K562 (cell line): ENCODE measurements at regions of chr5 and their contacts with region 1.

Region 1: DNA sequence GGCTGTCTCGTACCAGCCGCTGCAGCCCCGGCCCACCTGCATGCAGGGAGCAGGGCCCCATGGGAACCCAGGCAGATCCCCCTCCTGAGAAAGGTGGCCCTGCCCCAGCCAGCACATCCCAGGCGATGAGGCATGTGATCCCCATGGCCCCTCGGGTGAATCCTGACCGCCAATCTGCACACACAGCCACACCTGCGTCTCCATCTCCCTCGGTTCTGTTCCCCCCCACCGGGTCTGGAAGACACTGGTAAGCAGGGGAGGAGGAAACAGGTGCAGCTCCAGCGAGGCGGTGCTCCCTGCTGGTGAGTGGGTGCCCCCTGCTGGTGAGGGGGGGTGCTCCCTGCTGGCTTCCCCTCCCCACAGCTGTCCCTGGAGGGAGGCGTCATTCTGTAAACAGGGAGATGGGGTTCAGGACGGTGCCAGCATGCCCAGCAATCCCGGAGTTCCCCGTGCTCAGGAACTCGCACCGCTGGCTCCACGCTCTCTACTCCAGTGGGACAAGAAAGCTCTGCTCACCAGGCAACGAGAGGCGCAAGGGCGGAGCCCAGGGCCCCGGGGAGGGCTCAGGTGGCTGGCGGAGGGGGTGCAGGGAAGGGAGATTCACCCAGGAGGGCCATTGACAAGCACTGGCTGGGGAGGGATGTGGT is 28.4 kb upstream of the SLC12A7 start:
- DNase-seq: peak; percentile 81 to 94 (median 90)
- ATAC-seq: peak; percentile 94
- H3K4me3 ChIP-seq: no peak overlapping the region
- H3K27ac ChIP-seq: no peak overlapping the region
- H3K4me1 ChIP-seq: peaks cover 0 to 48% of the 10 kb centered on the region in 2 experiments; a peak in 2 of 5 replicates
- H3K27me3 ChIP-seq: peaks cover 21 to 83% of the 10 kb centered on the region in 2 experiments; a peak in 4 of 5 replicates
- CTCF ChIP-seq: peak; percentile 93 to 95 (median 93)
- EP300 ChIP-seq: no peak
- POLR2A ChIP-seq: no peak
- RAD21 ChIP-seq: peak; percentile 94 to 99

Region 2: DNA sequence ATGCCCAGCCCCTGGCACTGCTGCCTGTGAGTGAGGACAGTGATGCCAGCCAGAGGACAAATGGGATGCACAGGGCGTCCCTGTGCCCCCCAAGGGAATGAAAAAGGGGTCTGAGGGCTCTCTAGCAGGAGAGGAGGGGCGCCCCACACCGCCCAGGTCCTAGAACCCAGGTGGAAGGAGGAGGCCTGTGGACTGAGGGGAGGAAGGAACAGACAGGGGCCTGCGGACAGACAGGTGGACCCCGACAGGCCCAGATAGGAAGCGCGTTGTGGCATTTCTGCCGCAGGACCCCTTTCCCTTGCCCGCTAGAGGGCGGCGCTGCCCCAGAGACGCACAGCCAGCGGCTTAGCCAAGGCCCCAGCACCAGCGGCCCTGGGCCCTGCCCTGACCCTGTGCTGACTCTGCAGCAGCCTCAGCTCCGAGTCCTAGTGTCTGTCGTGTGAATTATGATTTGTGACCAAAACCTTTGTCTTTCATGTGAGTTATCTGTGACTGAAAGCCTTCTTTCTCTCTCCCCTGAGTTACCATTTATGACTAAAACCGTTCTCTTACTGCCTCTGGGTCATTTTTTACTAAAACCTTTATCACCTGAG is 216.9 kb before region 1 on chr5:
- CTCF ChIA-PET with region 1: interaction called, 9 read pairs
- POLR2A ChIA-PET with region 1: interaction called, 4 read pairs
- in situ Hi-C with region 1: no loop called
- intact Hi-C with region 1: loop called (anchors 1 kb)
- DNase-seq: peak; percentile 83 to 90 (median 88)
- ATAC-seq: peak; percentile 100
- H3K4me3 ChIP-seq: no peak overlapping the region
- H3K27ac ChIP-seq: no peak overlapping the region
- H3K4me1 ChIP-seq: peaks cover 7 to 20% of the 10 kb centered on the region in 2 experiments; a peak in 3 of 5 replicates
- H3K27me3 ChIP-seq: no peaks in the 10 kb centered on the region
- CTCF ChIP-seq: peak; percentile 95 to 96 (median 96)
- EP300 ChIP-seq: no peak
- POLR2A ChIP-seq: no peak
- RAD21 ChIP-seq: peak; percentile 97 to 99

Region 3: DNA sequence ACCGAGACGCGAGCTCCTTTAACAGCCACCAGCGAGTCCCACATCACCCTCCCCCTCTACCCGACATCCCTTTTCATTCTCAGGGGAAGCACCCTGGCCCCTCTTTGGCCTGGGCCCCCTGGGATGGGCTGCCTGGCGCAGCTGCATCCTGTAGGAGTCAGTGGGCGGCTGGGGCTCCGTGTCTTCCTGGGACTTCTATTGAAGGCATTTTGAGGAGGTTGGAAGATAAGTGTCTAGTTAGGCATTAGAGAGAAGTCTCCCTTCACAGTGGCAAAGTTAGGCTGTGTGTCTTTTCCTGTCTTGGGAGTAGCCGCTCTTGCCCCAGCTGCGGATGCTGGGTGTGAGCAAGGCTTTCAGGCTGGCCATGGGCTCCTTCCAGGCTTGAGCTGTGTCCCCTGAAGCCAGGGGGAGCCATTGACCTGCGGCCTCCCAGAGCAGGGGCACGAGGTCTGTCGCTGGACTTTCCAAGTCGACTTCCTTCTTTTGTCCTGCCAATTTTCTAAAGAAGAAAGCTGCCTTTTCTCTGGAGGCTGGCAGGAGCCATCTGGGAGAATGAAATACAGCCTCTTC is 150.2 kb before region 1 on chr5:
- CTCF ChIA-PET with region 1: interaction called, 22 read pairs
- POLR2A ChIA-PET with region 1: interaction called, 3 read pairs
- in situ Hi-C with region 1: no loop called
- intact Hi-C with region 1: no loop called
- DNase-seq: peak in 2 of 4 experiments; percentile 50 to 65
- ATAC-seq: peak; percentile 85
- H3K4me3 ChIP-seq: no peak overlapping the region
- H3K27ac ChIP-seq: no peak overlapping the region
- H3K4me1 ChIP-seq: no peaks in the 10 kb centered on the region; a peak in 1 of 5 replicates
- H3K27me3 ChIP-seq: peaks cover 7 to 43% of the 10 kb centered on the region in 2 experiments; a peak in 3 of 5 replicates
- CTCF ChIP-seq: peak; percentile 66 to 79 (median 66)
- EP300 ChIP-seq: no peak
- POLR2A ChIP-seq: no peak
- RAD21 ChIP-seq: peak; percentile 87 to 89

Region 4: GRCh38 chr5:1021136-1021968 is 118.9 kb before region 1 on chr5:
- CTCF ChIA-PET with region 1: no interaction called
- POLR2A ChIA-PET with region 1: no interaction called
- in situ Hi-C with region 1: loop called (anchors 10 kb)
- intact Hi-C with region 1: no loop called
- DNase-seq: no peak
- ATAC-seq: no peak; the same call in 2 of the 3 replicates
- H3K4me3 ChIP-seq: no peak overlapping the region
- H3K27ac ChIP-seq: no peak overlapping the region
- H3K4me1 ChIP-seq: no peaks in the 10 kb centered on the region; a peak in 2 of 5 replicates
- H3K27me3 ChIP-seq: peaks cover 40 to 48% of the 10 kb centered on the region in 2 experiments
- CTCF ChIP-seq: no peak
- EP300 ChIP-seq: no peak
- POLR2A ChIP-seq: no peak
- RAD21 ChIP-seq: no peak

Region 5: GRCh38 chr5:1052641-1053390 is 87.5 kb before region 1 on chr5:
- CTCF ChIA-PET with region 1: interaction called, 3 read pairs
- POLR2A ChIA-PET with region 1: interaction called, 3 read pairs
- in situ Hi-C with region 1: no loop called
- intact Hi-C with region 1: loop called (anchors 1 kb)
- DNase-seq: peak; percentile 48 to 56 (median 52)
- ATAC-seq: peak; percentile 78
- H3K4me3 ChIP-seq: no peak overlapping the region
- H3K27ac ChIP-seq: no peak overlapping the region
- H3K4me1 ChIP-seq: peaks cover 0 to 43% of the 10 kb centered on the region in 2 experiments; a peak in 1 of 5 replicates
- H3K27me3 ChIP-seq: peaks cover 44 to 84% of the 10 kb centered on the region in 2 experiments
- CTCF ChIP-seq: peak; percentile 57 to 69 (median 61)
- EP300 ChIP-seq: no peak
- POLR2A ChIP-seq: no peak
- RAD21 ChIP-seq: peak in 1 of 2 experiments; percentile 46; a peak in 2 of 4 replicates